ENCODE measurements at regions of chr4 and their contacts with region 1.

Region 1: GRCh38 chr4:139099366-139099982 is 77.5 kb downstream of the ELF2 start:
- DNase-seq: peak; percentile 82
- ATAC-seq: peak; percentile 86
- H3K4me3 ChIP-seq: no peak overlapping the region
- H3K27ac ChIP-seq: no peak overlapping the region
- H3K4me1 ChIP-seq: no peaks in the 10 kb centered on the region
- H3K27me3 ChIP-seq: no peaks in the 10 kb centered on the region
- CTCF ChIP-seq: peak; percentile 87
- EP300 ChIP-seq: no peak
- POLR2A ChIP-seq: no peak
- RAD21 ChIP-seq: peak; percentile 70

Region 2: GRCh38 chr4:139167774-139168444 is 68.4 kb after region 1 on chr4:
- CTCF ChIA-PET with region 1: interaction called, 26 read pairs
- POLR2A ChIA-PET with region 1: no interaction called
- in situ Hi-C with region 1: loop called (anchors 10 kb)
- intact Hi-C with region 1: loop called (anchors 1 kb)
- DNase-seq: peak; percentile 62
- ATAC-seq: peak; percentile 91
- H3K4me3 ChIP-seq: no peak overlapping the region
- H3K27ac ChIP-seq: no peak overlapping the region
- H3K4me1 ChIP-seq: peaks cover 33% of the 10 kb centered on the region
- H3K27me3 ChIP-seq: no peaks in the 10 kb centered on the region
- CTCF ChIP-seq: peak; percentile 55
- EP300 ChIP-seq: no peak
- POLR2A ChIP-seq: no peak
- RAD21 ChIP-seq: peak; percentile 49; the same call in 1 of the 2 replicates

Region 3: DNA sequence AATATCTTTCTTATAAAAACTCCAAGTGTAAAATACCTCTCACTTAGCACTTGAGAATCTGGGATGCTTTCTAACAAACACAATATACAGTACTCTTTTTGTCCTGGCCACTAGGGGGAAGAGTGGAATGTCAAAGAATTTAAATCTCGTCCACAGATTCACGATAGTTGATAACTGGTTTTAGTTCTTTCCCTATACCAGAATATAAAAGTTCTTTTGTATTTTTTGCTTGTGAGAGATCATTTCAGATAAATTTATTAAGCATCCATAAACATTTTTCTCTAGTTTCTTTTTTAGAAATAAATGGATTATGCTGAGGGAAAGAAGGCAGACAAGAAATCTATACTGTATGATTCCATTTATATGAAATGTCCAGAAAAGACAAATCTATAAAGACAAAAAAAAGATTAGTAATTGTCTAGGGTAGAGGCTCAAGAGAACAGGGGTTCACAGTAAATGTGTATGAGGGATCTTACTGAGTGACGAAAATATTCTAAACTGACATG is 130.1 kb after region 1 on chr4:
- CTCF ChIA-PET with region 1: interaction called, 9 read pairs
- POLR2A ChIA-PET with region 1: no interaction called
- in situ Hi-C with region 1: no loop called
- intact Hi-C with region 1: loop called (anchors 1 kb)
- DNase-seq: peak; percentile 50
- ATAC-seq: peak; percentile 76
- H3K4me3 ChIP-seq: no peak overlapping the region
- H3K27ac ChIP-seq: no peak overlapping the region
- H3K4me1 ChIP-seq: peaks cover 14% of the 10 kb centered on the region
- H3K27me3 ChIP-seq: no peaks in the 10 kb centered on the region
- CTCF ChIP-seq: peak; percentile 69
- EP300 ChIP-seq: no peak
- POLR2A ChIP-seq: no peak
- RAD21 ChIP-seq: no peak

Region 4: DNA sequence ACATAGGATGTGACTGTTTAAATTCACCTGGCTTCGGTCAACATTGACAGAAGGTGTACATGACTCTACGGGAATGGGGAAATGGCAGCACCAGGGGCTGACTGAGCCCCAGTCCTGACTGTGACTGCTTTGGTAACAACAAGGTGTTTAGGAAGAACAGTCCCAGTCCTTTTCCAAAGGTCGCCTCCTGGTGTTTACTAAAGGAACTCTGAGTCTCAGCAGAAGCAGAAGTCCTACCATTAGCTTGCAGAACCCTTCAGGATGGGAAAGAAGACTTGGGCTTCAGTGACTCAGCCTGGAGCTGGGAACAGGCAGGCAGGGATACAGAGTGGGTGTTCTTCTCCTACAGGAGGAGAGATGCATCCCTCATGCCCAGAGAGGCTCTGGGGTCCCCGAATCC is 669.4 kb after region 1 on chr4:
- CTCF ChIA-PET with region 1: no interaction called
- POLR2A ChIA-PET with region 1: no interaction called
- in situ Hi-C with region 1: no loop called
- intact Hi-C with region 1: no loop called
- DNase-seq: peak; percentile 36
- ATAC-seq: peak; percentile 85
- H3K4me3 ChIP-seq: no peak overlapping the region
- H3K27ac ChIP-seq: no peak overlapping the region
- H3K4me1 ChIP-seq: peaks cover 21% of the 10 kb centered on the region
- H3K27me3 ChIP-seq: peaks cover 0 to 4% of the 10 kb centered on the region in 2 experiments; a peak in 2 of 5 replicates
- CTCF ChIP-seq: peak; percentile 67
- EP300 ChIP-seq: no peak
- POLR2A ChIP-seq: no peak
- RAD21 ChIP-seq: no peak

Measured in HepG2 (cell line).